GM18951 (cell line): ENCODE measurements at regions of chr3 and their contacts with region 1.

Region 1: DNA sequence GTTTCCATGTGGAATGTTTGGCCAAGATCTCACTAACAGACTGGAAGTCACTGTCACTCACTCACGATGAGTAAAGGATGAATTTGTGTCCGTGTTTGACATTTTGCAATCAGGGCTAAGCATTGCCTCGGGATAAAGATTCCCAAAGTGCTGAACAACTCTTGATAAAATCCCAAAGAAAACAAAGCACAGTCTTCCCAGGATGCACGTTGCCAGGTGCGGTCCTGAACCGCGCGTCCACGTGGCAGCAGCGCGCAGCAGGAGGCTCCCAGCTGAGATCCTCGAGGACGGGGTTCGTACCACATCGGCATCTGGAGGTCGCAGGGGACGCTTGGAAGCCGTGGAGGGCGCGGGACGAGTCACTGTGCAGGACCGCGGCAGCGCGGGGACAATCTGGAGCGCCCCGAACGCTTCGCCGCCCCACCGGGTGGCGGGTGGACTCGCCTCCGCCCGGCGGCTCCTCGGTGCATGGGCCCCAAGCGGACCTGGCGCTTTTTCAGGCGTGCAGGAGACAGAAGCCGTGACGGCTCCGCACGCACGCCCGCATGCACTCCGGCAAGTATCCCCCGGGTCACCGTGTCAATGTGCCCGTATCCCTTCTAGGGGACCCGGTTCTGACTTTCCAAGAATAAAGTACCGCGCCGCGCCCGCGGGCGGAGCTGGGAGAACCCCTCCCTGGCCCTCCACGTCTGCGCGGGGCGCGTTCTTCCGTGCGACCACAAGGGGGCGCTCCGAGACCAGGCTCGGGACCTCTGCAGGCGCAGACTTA is 17.7 kb downstream of the CPN2 start:
- POLR2A ChIP-seq: no peak

Region 2: GRCh38 chr3:193400304-193400703 is 933.1 kb before region 1 on chr3:
- in situ Hi-C with region 1: no loop called
- POLR2A ChIP-seq: no peak

Region 3: DNA sequence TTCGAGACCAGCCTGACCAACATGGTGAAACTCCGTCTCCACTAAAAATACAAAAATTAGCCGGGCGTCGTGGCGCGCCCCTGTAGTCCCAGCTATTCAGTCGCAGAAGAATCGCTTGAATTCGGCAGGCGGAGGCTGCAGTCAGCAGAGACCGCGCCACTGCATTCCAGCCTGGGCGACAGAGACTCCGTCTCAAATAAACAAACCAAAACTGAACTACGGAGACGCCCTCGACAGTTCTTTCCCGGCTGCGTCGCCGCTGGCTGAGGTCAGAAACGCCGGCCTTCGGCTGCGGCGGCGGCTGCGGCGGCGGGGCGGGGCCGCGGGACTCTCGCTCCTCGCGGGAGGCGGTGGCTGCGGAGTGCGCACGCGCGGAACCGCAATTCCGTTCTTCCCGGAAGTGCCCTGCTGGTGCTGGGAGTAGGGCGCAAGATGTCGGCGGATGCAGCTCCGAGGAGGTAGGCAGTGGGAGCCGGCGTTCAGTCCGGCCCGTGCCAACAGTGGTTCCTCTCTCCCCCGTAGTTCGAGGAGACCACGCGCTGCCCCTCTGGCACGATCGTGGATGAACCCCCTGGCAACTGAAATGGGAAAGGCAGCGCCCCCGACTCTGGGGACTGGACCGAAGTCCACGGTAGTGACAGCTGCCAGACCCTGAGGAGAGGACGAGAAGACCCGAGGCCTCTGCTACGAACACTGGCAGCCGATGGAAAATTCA is 250.4 kb after region 1 on chr3:
- in situ Hi-C with region 1: loop called (anchors 10 kb)
- POLR2A ChIP-seq: peak; percentile 96